Esophagus muscularis mucosa (tissue), 4 donors: ENCODE measurements at regions of chr19 and their contacts with region 1.

Region 1: DNA sequence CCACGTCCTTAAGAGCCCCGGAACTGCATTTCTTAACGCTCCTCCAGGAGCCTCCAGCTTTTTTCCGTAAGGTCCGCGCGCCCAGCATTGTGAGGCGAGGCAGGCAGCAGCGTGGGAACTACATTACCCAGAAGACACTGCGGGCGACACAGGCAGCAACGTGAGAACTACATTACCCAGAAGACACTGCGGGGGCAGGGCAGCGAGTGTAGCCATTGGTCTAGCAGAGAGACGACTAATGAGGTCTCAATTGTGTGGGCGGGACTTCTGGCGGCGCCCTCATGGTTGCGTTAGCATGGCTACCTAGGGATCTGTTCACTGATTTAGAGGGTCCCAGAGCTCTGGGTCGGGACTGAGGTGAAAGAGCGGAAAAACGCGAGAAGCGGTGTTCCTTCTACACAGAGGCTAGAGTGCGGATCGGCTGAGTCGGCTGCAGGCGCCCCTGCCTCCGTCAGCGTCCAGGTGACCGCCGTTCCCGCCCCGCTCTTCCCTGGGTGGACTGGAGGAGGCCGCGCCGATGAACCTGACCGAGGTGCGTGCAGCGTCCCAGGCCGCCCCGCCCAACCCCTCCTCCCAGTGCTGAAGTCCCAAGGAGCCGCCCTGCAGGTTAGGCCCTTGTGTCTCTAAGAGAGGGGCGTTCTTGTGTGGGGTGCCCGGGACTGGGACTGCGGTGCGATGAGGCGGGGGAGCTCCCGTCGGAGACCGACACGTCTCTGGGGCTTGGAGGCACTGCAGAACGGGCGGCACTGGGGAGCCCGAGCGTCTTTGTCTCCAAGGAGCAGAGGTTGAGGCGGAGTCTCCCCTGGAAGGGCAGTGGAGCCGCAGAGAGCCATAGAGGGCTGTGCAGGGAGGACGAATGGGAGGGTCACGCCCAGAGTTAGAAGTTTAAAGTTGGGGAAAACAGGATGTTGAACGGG is at the start of gene ZNF749:
- DNase-seq: peak; percentile 100
- H3K4me3 ChIP-seq: peak within 1 kb of the TSS; percentile 75 to 85 (median 80)
- H3K27ac ChIP-seq: peak within 1 kb of the TSS; percentile 47 to 74 (median 59)
- H3K4me1 ChIP-seq: peaks cover 16 to 25% (median 22%) of the 10 kb centered on the region in 4 donors
- H3K27me3 ChIP-seq: no peaks in the 10 kb centered on the region
- CTCF ChIP-seq: no peak
- EP300 ChIP-seq: no peak
- POLR2A ChIP-seq: no peak
- total RNA-seq, gene ZNF749: 2.5 to 6.4 (median 4.6) TPM

Region 2: GRCh38 chr19:57334191-57334590 is 101.1 kb before region 1 on chr19:
- intact Hi-C with region 1: no loop called
- DNase-seq: no peak
- H3K4me3 ChIP-seq: no peak overlapping the region
- H3K27ac ChIP-seq: no peak overlapping the region
- H3K4me1 ChIP-seq: peaks cover 5 to 12% (median 7%) of the 10 kb centered on the region in 4 donors
- H3K27me3 ChIP-seq: no peaks in the 10 kb centered on the region
- CTCF ChIP-seq: no peak
- EP300 ChIP-seq: no peak
- POLR2A ChIP-seq: no peak

Region 3: DNA sequence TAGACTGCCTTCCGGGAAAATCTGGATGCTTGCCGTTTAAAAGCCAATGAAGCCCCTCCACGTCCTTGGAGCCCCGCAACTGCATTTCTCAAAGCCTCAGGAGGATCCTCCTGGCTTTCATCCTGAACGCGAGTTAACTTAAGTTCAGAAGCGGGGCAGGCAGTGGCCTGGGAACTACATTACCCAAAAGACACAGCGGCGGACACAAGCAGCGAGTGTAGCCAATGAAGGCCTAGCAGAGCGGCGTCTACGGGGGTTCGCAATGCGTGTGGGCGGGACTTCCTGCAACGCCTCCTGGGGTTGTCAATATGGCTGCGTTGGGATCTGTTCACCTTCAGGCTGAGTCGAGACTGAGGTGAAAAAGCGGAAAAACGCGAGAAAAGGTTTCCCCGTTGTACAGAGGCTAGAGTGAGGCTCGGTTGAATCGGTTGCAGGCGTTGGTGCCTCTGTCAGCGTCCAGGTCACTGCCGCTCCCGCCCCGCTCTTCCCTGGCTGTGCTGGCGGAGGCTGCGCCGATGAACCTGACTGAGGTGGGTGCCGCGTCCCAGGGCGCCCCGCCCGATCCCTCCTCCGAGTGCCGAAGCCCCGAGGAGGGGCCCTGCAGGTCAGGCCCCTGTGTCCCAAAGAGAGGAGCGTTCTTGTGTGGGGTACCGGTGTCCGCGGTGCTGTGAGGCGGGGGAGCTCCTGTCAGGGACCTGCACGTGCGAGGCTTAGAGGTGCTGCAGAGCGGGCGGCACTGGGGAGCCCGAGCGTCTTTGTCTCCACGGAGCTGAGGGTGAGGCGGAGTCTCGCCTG is 24.2 kb before region 1 on chr19 and contains the start of gene ZNF17:
- intact Hi-C with region 1: loop called (anchors 2 kb)
- DNase-seq: peak; percentile 97
- H3K4me3 ChIP-seq: peak within 1 kb of the TSS; percentile 75 to 93 (median 82)
- H3K27ac ChIP-seq: peak within 1 kb of the TSS; percentile 75 to 80 (median 78)
- H3K4me1 ChIP-seq: peaks cover 19 to 29% (median 23%) of the 10 kb centered on the region in 4 donors
- H3K27me3 ChIP-seq: no peaks in the 10 kb centered on the region
- CTCF ChIP-seq: no peak
- EP300 ChIP-seq: no peak
- POLR2A ChIP-seq: no peak
- total RNA-seq, gene ZNF17: 6.1 to 9.6 (median 8.8) TPM

Region 4: DNA sequence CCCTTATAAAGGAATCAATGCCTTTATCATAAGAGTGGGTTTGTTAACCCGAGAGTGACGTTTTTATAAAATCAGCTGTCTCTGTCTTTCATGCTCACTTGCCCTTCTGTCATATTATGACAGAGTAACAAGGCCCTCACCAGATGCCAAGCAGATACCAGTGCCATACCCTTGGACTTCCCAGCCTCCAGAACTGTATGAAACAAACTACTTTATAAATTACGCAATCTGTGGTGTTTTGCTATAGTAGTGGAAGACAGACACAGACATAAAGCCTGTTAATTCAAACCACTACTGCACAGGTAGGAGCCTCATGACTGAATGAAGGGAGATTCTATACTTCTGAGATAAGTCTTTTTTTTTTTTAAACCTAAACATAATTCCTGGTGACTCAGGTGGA is 17.0 kb after region 1 on chr19:
- intact Hi-C with region 1: no loop called
- DNase-seq: no peak
- H3K4me3 ChIP-seq: no peak overlapping the region
- H3K27ac ChIP-seq: no peak overlapping the region
- H3K4me1 ChIP-seq: no peaks in the 10 kb centered on the region
- H3K27me3 ChIP-seq: no peaks in the 10 kb centered on the region
- CTCF ChIP-seq: no peak
- EP300 ChIP-seq: no peak
- POLR2A ChIP-seq: no peak

Region 5: DNA sequence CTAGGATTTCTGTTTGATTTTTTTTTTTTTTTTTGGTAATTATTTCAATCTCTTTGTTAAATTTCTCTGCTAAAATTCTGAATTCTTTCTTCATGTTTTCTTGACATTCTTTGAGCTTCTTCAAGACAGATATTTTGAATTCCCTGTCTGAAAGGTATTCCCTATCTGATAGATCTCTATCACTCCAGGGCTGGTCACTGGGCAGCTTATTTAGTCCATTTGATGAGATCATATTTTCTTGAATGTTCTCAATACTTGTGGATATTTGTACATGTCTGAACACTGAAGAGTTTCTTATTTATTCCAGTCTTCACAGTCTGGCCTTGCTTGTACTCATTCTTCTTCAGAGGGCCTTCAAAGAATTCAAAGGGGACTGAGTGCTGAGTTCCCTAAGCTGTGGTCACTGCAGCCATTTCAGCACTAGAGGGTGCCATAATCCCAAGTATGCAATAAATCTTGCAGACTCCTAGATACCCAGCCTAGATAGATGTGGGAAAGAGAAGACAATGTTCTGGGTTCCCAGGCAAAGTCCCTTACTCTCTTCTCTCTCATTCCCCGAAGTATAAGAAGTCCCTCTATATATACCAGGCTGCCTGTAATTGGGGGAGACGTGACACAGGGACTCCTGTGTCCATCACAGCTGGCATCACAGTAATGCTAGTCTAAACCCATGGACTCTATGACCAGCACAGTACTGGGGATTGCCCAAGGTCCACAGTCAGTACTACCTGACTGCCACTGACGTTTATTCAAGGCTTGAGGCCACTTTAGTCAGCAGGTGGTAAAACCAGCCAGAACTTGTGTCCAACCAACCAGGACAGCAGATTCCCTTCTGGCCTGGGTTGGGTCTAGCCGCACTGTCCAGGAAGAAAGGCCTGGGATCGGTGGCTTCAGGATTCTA is 30.4 kb after region 1 on chr19:
- intact Hi-C with region 1: no loop called
- DNase-seq: no peak
- H3K4me3 ChIP-seq: no peak overlapping the region
- H3K27ac ChIP-seq: no peak overlapping the region
- H3K4me1 ChIP-seq: no peaks in the 10 kb centered on the region
- H3K27me3 ChIP-seq: no peaks in the 10 kb centered on the region
- CTCF ChIP-seq: no peak
- EP300 ChIP-seq: no peak
- POLR2A ChIP-seq: no peak